ENCODE measurements at regions of chr19 and their contacts with region 1.

Region 1: DNA sequence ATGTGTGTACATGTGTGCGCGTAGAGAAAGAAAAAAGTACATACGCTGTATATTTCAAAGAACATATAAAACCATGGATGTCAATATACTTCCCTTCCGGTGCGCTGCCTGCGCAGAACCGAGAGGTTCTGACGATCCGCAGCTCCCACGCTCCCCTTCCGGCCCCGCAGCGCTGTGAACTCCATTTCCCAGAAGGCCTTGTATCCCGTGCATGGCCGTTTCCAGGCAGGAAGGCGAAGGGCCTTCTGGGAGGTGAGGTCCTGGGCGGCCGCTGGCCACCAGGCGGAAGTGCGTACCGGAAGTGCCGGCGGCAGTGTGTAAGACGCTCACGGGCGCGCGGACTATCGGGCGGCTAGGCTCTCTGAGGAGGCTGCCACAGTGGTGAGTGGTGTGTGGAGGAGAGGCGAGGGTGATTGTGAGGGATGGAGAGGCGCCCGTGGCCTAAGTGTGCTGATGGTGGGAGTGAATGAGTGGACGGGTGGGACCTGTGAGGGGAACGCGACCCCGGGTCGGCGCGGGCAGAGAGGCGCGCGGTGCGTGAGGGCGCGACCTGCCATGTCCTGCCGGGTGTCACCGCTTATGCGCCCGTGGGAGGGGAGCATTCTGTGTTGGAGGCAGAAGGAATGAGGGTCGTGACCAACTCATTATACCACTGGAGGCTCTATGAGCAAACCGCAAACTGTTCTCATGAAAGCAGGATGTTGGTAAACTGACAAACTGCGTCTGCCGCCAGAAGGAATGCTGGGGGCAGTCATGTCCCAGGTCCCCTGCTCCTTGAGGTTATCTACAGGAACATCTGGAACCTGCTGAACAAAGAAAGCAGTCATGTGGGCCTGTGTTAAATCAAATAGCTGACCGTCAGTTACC is at the start of gene ERVK3-1:
- DNase-seq: peak; percentile 94 to 95
- ATAC-seq: peak; percentile 99 to 100 (median 100)
- H3K4me3 ChIP-seq: peak within 1 kb of the TSS; percentile 50 to 97 (median 76)
- H3K27ac ChIP-seq: peak within 1 kb of the TSS; percentile 60 to 96 (median 91)
- H3K4me1 ChIP-seq: peaks cover 3 to 24% (median 18%) of the 10 kb centered on the region in 9 donors
- H3K27me3 ChIP-seq: no peaks in the 10 kb centered on the region
- CTCF ChIP-seq: peak in 6 of 9 donors; percentile 12 to 27 (median 17)
- total RNA-seq, gene ERVK3-1: 14.4 to 28.7 (median 17.7) TPM

Region 2: DNA sequence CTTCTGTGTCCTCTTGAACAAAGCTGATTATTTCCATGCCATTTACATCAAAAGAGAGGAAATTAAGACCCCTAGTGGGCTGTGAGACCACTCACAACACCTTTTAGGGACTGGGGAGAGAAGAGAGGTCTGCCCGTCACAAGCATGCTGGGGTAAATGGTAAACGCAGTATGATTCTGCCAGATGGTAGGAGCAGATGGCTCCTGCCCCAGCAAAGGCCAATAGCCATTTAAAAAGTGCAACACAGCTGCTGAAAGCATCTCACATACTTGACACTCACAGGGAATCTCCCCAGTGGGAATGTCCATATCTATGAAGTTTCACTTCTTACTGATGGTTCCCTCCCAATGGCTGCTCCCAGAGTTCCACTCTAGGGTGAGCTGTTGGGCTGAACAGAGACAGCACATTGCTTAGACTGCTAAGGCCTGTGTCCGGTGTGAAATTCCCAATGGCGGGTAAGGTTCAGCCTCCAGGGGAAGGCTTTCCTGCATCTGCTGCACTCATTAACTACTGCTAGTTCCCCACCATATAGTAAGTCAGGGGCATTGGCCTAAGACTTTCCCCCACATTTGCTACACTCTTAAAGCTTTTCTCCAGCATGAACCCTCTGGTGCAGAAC is 585.3 kb before region 1 on chr19:
- intact Hi-C with region 1: loop called in 1 of 10 experiments (anchors 5 kb)
- DNase-seq: no peak
- ATAC-seq: no peak
- H3K4me3 ChIP-seq: no peak overlapping the region
- H3K27ac ChIP-seq: no peak overlapping the region
- H3K4me1 ChIP-seq: no peaks in the 10 kb centered on the region
- H3K27me3 ChIP-seq: no peaks in the 10 kb centered on the region
- CTCF ChIP-seq: no peak

Region 3: DNA sequence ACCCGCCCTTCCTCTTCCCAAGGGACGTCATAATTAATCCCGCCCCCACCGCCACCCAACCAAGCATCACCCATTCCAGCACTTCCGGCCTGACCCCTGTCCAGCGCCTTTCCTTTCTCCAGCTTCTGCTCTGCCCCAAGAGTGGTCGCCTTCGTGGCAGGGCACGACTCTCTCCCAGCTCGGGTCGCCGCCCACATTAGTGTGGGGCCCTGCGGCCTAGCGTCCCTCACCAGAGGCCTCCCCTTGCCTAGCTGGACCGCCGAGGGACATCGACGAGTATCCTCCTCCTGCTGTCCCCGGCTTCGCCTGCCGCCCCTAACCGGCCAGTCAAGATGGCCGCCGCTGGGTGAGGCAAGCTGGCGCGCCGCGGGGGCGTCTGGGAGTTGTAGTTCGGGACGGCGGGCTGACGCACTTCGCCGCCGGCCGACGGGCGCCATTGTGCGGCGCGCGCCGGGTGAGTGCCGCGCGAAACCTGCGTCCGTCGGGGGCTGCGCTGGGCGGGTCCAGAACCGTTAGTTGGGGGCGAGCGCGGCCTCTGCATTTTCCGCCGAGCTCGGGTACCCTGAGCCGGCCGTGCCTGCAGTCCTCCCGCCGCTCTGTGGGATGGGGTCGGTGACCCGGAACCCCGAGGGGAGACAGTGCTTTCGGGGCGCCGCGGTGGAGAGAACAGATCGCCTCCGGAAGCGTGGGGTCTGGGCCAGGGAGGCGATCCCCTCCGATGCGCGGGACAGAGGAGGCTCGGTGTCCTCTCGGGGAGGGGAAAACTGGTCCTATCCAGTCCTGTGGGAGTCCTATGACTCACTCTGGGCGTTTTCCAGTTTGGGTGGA is 122.1 kb before region 1 on chr19 and contains the start of gene ZNF274:
- intact Hi-C with region 1: loop called in 3 of 10 experiments (anchors 1 to 10 kb)
- DNase-seq: peak; percentile 95
- ATAC-seq: peak; percentile 95 to 97 (median 96)
- H3K4me3 ChIP-seq: peak within 1 kb of the TSS; percentile 67 to 98 (median 92)
- H3K27ac ChIP-seq: peak within 1 kb of the TSS; percentile 96 to 100 (median 100)
- H3K4me1 ChIP-seq: peaks cover 0 to 17% (median 6%) of the 10 kb centered on the region in 9 donors
- H3K27me3 ChIP-seq: no peaks in the 10 kb centered on the region
- CTCF ChIP-seq: no peak
- total RNA-seq, gene ZNF274: 18.4 to 27.6 (median 22.9) TPM

Region 4: DNA sequence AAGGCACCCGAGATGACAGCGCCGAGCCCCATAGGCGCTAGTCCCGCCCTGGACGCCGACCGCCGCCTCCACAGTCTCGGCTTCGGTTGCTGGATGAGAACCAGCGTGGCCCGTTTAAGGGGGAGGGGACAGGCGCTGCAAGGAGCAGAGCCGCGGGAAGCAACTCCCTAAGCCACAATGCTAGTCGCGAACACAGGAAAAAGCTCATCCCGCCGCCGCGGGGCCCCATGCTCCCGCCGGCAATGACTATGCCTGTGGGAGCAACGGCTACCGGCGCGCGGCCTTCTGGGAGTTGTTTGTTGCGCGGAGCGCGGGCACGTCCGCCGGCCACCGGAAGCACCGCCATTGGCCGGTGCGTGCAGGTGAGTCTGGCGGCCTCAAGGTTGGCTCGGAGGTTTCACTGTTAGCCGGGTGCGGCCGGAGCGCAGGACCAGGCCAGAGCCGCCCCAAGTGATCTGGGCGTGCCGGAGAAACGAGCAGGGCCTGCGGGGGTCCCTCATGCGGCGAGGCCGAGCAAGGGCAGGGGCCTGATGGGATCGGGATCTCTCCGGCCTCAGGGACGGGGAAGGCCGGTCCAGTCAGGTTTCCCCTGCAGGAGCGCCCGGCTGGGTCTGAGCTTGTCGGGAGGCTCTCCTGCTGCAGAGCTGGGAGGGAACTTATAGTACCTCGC is 76.6 kb before region 1 on chr19 and contains the start of gene ZNF544:
- intact Hi-C with region 1: loop called in 2 of 10 experiments (anchors 2 to 10 kb)
- DNase-seq: peak; percentile 75 to 80
- ATAC-seq: peak; percentile 95 to 99 (median 97)
- H3K4me3 ChIP-seq: peak within 1 kb of the TSS; percentile 60 to 94 (median 82)
- H3K27ac ChIP-seq: peak within 1 kb of the TSS; percentile 42 to 95 (median 88)
- H3K4me1 ChIP-seq: peaks cover 5 to 23% (median 17%) of the 10 kb centered on the region in 9 donors
- H3K27me3 ChIP-seq: no peaks in the 10 kb centered on the region
- CTCF ChIP-seq: peak in 1 of 9 donors; percentile 25
- total RNA-seq, gene ZNF544: 19.2 to 35.0 (median 23.7) TPM

Region 5: DNA sequence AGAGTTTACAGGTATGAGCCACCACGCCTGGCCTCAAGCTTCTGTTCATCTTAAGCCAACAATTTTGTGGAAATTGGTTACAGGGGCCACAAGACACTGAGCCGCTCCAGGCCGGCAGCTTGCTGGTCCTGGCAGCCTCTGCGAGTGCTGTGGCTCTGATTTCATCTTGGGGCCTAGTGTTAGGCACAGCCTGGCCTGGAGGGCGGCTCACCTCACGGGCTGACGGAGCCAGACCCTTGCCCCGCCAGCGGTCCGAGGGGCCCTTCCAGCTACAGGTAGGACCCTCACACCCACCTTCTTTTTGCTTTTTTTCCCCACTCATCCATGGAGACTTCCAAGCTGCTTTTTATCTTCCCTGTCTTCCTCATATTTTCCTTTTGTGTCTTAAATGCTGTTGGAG is 68.0 kb before region 1 on chr19:
- intact Hi-C with region 1: loop called in 1 of 10 experiments (anchors 10 kb)
- DNase-seq: no peak
- ATAC-seq: no peak
- H3K4me3 ChIP-seq: no peak overlapping the region
- H3K27ac ChIP-seq: no peak overlapping the region
- H3K4me1 ChIP-seq: no peaks in the 10 kb centered on the region
- H3K27me3 ChIP-seq: no peaks in the 10 kb centered on the region
- CTCF ChIP-seq: no peak

Region 6: GRCh38 chr19:58362272-58362994 is 57.1 kb after region 1 on chr19 and contains the start of gene ZNF497:
- intact Hi-C with region 1: loop called in 1 of 10 experiments (anchors 2 kb)
- DNase-seq: peak; percentile 96 to 98
- ATAC-seq: peak; percentile 96 to 98 (median 97)
- H3K4me3 ChIP-seq: peak within 1 kb of the TSS; percentile 48 to 94 (median 75)
- H3K27ac ChIP-seq: peak within 1 kb of the TSS; percentile 88 to 97 (median 96)
- H3K4me1 ChIP-seq: peaks cover 0 to 23% (median 11%) of the 10 kb centered on the region in 9 donors
- H3K27me3 ChIP-seq: peaks cover 0 to 24% (median 11%) of the 10 kb centered on the region in 7 donors
- CTCF ChIP-seq: peak in 2 of 9 donors; percentile 1 to 12
- total RNA-seq, gene ZNF497: 0.14 to 0.73 (median 0.30) TPM in 9 of 10 donors, not detected in the other

Measured in heart right ventricle (tissue), 16 donors.